ENCODE measurements at regions of chr1 and their contacts with region 1.

Region 1: DNA sequence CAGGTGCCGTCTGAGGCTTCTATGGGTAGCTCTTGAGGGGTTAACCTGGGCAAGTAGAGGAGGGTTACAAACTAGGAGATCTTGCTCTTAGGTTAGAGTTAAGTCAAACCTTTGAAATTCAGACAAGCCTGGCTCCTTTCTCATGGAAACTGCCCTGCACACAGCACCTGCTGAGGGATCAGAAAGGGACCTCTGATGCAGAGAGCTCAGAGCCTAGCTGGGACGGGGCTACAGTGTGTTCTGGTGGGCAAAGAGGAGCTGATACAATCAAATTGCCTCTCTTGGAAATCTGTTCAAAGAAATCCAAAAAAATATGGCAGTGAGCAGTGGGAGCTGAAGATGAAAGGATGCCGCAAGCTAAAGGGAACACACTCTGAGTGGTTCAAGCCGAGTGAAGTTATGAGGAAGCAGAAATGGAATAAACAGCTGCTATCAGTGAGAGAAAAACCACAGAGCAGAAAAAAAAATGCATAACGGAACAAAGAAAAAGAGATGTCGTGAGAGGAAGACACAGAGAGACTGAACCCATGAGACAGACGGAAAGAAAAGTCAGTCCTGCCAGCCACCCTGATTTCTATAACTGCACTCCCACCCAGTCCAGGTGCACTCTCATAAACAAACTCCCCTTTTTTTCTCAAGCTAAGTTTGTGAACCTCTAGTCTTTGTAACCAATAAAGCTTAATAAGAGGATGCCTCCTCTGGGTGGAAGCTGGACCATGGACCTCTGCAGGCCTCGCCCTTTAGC is 26.6 kb downstream of the PAFAH2 start:
- DNase-seq: no peak
- H3K4me3 ChIP-seq: no peak overlapping the region
- H3K27ac ChIP-seq: no peak overlapping the region
- H3K4me1 ChIP-seq: peaks cover 2 to 6% (median 3%) of the 10 kb centered on the region in 4 experiments; a peak in 4 of 7 replicates
- H3K27me3 ChIP-seq: no peaks in the 10 kb centered on the region; a peak in 1 of 7 replicates
- CTCF ChIP-seq: no peak
- EP300 ChIP-seq: no peak
- POLR2A ChIP-seq: no peak
- RAD21 ChIP-seq: no peak

Region 2: GRCh38 chr1:25922056-25922969 is 48.9 kb before region 1 on chr1:
- CTCF ChIA-PET with region 1: no interaction called
- POLR2A ChIA-PET with region 1: no interaction called
- DNase-seq: no peak
- H3K4me3 ChIP-seq: peak overlapping the region; percentile 46 to 69 (median 58)
- H3K27ac ChIP-seq: no peak overlapping the region
- H3K4me1 ChIP-seq: peaks cover 6 to 20% (median 13%) of the 10 kb centered on the region in 4 experiments
- H3K27me3 ChIP-seq: peaks cover 0 to 6% (median 2%) of the 10 kb centered on the region in 4 experiments; a peak in 4 of 7 replicates
- CTCF ChIP-seq: no peak
- EP300 ChIP-seq: no peak
- POLR2A ChIP-seq: peak in 1 of 2 experiments; percentile 15; a peak in 1 of 3 replicates
- RAD21 ChIP-seq: no peak

Region 3: GRCh38 chr1:25958465-25958864 is 12.8 kb before region 1 on chr1:
- CTCF ChIA-PET with region 1: interaction called, 22 read pairs
- POLR2A ChIA-PET with region 1: interaction called, 3 read pairs
- DNase-seq: no peak
- H3K4me3 ChIP-seq: no peak overlapping the region
- H3K27ac ChIP-seq: no peak overlapping the region
- H3K4me1 ChIP-seq: peaks cover 0 to 5% (median 3%) of the 10 kb centered on the region in 4 experiments; a peak in 2 of 7 replicates
- H3K27me3 ChIP-seq: no peaks in the 10 kb centered on the region
- CTCF ChIP-seq: no peak
- EP300 ChIP-seq: no peak
- POLR2A ChIP-seq: no peak
- RAD21 ChIP-seq: no peak